ENCODE measurements at regions of chr12 and their contacts with region 1.

Region 1: DNA sequence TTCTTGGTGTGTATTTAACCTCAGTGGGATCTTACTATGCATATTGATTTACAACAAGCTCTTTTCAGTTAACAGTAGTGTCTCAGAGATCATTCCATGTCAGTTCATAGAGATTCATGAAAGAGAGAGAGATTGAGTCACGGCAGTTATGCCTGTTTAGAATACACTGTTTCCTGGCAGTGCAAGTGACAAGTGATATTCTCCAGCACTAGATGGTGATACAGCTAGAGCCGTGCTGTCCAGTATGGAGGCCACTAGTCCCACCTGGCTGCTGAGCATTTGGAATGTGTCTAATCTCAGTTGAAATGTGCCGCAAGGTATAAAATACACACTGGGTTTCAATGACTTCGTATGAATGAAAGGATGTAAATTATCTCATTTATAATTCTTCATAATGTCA is 184.4 kb downstream of the SUDS3 start:
- DNase-seq: peak in 4 of 5 donors; percentile 40 to 61 (median 44)
- ATAC-seq: peak; percentile 94 to 98 (median 96)
- H3K4me3 ChIP-seq: no peak overlapping the region
- H3K27ac ChIP-seq: no peak overlapping the region
- H3K4me1 ChIP-seq: peaks cover 0 to 10% (median 0%) of the 10 kb centered on the region in 12 donors
- H3K27me3 ChIP-seq: no peaks in the 10 kb centered on the region
- CTCF ChIP-seq: peak in 3 of 12 donors; percentile 7 to 26 (median 24)
- POLR2A ChIP-seq: no peak

Region 2: DNA sequence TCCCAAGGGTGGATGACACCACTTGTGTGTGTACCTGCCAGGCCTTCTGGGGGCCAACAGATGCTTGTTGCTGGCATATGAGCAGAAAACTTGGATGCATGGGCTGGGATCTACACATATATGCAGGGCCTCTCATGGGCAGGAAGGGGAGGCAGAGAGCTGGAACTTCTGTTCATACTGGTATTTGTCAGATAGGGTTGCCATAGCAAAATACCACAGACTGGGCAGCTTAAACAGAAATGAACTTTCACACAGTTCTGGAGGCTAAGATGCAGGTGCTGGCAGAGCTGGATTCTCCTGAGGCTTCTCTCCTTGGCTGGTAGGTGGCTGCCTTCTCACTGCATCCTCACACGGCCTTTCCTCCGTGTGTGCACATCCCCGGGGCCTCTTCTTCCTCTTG is 62.6 kb before region 1 on chr12:
- intact Hi-C with region 1: loop called in 1 of 10 experiments (anchors 2 kb)
- DNase-seq: peak in 4 of 5 donors; percentile 11 to 50 (median 26)
- ATAC-seq: peak; percentile 85 to 96 (median 90)
- H3K4me3 ChIP-seq: no peak overlapping the region
- H3K27ac ChIP-seq: peak overlapping the region in 2 of 12 donors; percentile 43 to 62
- H3K4me1 ChIP-seq: peaks cover 0 to 22% (median 0%) of the 10 kb centered on the region in 12 donors
- H3K27me3 ChIP-seq: no peaks in the 10 kb centered on the region
- CTCF ChIP-seq: peak in 9 of 12 donors; percentile 11 to 44 (median 26)
- POLR2A ChIP-seq: no peak

Measured in heart left ventricle (tissue), 16 donors.